Activated CD4-positive, alpha-beta memory T cell treated with anti-CD3 and anti-CD28 coated beads for 36 hours (primary cell): ENCODE measurements at regions of chr12 and their contacts with region 1.

Region 1: DNA sequence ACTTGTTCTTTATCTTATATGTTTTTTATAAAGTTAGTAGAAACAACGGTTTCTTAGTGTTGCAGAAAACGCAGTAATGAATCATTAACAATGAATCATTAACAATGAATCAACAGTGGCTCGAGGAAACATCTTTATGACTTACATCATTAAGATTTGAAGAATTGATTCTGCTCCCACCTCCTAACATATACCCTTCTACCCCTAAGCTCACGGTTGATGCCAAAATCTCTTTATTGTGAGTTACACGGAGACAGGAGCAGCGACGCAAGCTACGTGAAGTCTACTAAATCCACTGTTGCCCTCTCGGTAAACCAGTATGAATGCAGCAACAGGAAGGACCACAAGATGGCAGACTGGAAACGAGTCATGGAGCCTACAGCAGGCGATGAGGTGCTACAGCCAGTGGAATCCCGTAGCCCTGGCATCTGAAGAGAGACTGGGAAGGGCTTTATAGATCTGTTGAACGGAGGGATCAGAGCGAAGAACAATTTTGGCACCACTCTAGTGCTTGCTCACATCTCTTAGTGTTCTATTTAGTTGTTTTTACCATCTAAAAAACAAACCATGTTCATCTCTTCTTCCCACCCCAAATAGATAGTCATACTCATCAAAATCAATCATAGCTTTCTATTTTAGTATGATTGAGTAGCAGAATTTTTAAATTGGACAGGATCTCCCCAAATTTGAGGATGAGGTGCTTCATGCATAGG is 332.7 kb downstream of the DUSP6 start:
- DNase-seq: peak; percentile 79
- H3K4me3 Mint-ChIP-seq: no peak overlapping the region
- H3K27ac Mint-ChIP-seq: no peak overlapping the region
- H3K4me1 Mint-ChIP-seq: peaks cover 8% of the 10 kb centered on the region
- H3K27me3 Mint-ChIP-seq: peaks cover 5% of the 10 kb centered on the region

Region 2: GRCh38 chr12:88935856-88936255 is 83.7 kb before region 1 on chr12:
- CTCF ChIA-PET with region 1: no interaction called
- POLR2A ChIA-PET with region 1: no interaction called
- intact Hi-C with region 1: no loop called
- DNase-seq: no peak
- H3K4me3 Mint-ChIP-seq: no peak overlapping the region
- H3K27ac Mint-ChIP-seq: no peak overlapping the region
- H3K4me1 Mint-ChIP-seq: no peaks in the 10 kb centered on the region
- H3K27me3 Mint-ChIP-seq: no peaks in the 10 kb centered on the region

Region 3: DNA sequence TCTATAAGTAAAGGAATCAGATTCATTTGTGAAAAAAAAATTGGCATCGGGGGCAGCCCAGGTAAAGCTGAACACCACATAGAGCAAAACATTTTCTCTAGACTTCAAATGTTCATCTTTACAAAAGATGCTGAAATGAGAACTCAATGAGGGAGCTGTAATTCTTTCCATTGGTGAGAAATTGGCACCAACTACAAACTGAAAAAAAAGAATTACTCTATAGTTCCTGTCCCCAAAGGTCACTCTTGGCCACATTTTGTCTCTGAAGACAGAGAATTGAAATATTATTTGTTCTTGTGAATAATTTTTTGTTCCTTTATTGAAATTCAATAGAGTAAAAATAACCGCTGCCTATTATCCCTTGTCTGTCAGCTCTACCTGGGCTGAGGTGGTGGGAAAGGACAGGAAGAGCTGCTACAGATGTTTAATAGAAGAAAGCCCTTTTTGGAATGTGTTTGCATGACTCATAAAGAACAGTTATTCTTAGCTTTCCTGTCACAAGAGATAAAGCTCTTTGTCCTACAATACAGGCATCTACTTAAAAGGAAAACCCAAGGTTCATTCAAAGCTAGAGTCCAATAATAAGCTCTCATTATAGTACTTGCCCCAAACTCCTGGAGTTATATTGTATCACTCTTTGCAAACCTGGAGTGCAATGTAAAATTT is 59.2 kb before region 1 on chr12:
- CTCF ChIA-PET with region 1: no interaction called
- POLR2A ChIA-PET with region 1: no interaction called
- intact Hi-C with region 1: no loop called
- DNase-seq: no peak
- H3K4me3 Mint-ChIP-seq: no peak overlapping the region
- H3K27ac Mint-ChIP-seq: no peak overlapping the region
- H3K4me1 Mint-ChIP-seq: no peaks in the 10 kb centered on the region
- H3K27me3 Mint-ChIP-seq: peaks cover 3% of the 10 kb centered on the region

Region 4: GRCh38 chr12:89029961-89030360 is 10.4 kb after region 1 on chr12:
- CTCF ChIA-PET with region 1: interaction called, 16 read pairs
- POLR2A ChIA-PET with region 1: no interaction called
- intact Hi-C with region 1: no loop called
- DNase-seq: no peak
- H3K4me3 Mint-ChIP-seq: no peak overlapping the region
- H3K27ac Mint-ChIP-seq: no peak overlapping the region
- H3K4me1 Mint-ChIP-seq: peaks cover 3% of the 10 kb centered on the region
- H3K27me3 Mint-ChIP-seq: peaks cover 4% of the 10 kb centered on the region

Region 5: DNA sequence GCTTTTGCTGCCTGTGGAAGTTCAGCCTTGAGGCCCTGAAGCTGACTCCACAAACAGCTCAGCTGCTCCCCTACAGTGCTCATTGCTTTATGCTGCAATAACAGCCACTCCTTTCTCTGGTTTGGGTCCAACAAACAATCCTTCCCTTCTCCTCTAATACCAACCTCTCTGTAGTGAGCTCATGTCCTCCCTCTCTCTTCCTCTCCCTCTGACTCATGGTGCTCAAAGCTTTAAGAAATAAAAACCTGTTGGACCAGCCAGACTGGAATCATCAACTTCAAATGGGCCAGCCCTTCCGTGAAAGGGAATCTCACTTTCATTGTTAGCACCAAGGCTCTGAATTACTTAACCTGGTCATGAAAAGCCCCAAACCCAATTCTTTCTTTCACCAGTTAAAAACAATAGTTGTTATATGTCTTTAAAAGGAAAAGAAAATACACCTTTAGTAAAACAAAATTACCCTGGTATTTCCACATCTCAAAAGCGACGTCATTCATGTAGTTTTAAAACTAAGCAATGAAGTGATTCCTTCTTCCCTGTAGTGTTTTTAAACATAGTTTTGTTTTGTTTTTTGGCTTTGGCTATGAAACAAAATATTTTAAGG is 206.3 kb after region 1 on chr12:
- CTCF ChIA-PET with region 1: interaction called, 6 read pairs
- POLR2A ChIA-PET with region 1: no interaction called
- intact Hi-C with region 1: loop called (anchors 2 kb)
- DNase-seq: peak; percentile 72
- H3K4me3 Mint-ChIP-seq: peak overlapping the region; percentile 34
- H3K27ac Mint-ChIP-seq: peak overlapping the region; percentile 99
- H3K4me1 Mint-ChIP-seq: peaks cover 65% of the 10 kb centered on the region
- H3K27me3 Mint-ChIP-seq: no peaks in the 10 kb centered on the region

Region 6: GRCh38 chr12:89470741-89471509 is 451.4 kb after region 1 on chr12:
- CTCF ChIA-PET with region 1: interaction called, 25 read pairs
- POLR2A ChIA-PET with region 1: no interaction called
- intact Hi-C with region 1: no loop called
- DNase-seq: no peak
- H3K4me3 Mint-ChIP-seq: no peak overlapping the region
- H3K27ac Mint-ChIP-seq: peak overlapping the region; percentile 64
- H3K4me1 Mint-ChIP-seq: peaks cover 58% of the 10 kb centered on the region
- H3K27me3 Mint-ChIP-seq: no peaks in the 10 kb centered on the region

Region 7: DNA sequence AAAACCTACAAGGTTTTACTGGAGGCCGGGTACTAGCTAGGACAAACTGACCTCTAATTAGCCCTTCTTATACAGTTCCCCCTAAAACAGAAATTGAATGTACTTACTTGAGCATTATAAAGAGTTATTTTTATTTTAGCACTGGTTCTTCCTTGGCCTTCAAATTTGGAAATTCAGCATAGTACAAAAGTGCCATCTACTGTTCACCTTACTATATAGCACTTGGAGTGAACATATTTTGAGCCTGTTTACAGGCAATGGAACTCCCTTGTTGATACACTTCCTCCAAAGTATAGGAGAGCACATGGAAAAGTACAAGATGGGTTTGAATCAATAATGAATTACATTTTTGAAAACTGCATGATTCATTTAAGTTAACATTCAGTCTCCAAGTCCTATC is 510.2 kb after region 1 on chr12:
- CTCF ChIA-PET with region 1: interaction called, 88 read pairs
- POLR2A ChIA-PET with region 1: interaction called, 4 read pairs
- intact Hi-C with region 1: loop called (anchors 1 kb)
- DNase-seq: no peak
- H3K4me3 Mint-ChIP-seq: no peak overlapping the region
- H3K27ac Mint-ChIP-seq: no peak overlapping the region
- H3K4me1 Mint-ChIP-seq: peaks cover 12% of the 10 kb centered on the region
- H3K27me3 Mint-ChIP-seq: no peaks in the 10 kb centered on the region

Region 8: GRCh38 chr12:90102957-90103652 is 1083.5 kb after region 1 on chr12:
- CTCF ChIA-PET with region 1: no interaction called
- POLR2A ChIA-PET with region 1: no interaction called
- intact Hi-C with region 1: loop called (anchors 10 kb)
- DNase-seq: peak; percentile 13
- H3K4me3 Mint-ChIP-seq: peak overlapping the region; percentile 19
- H3K27ac Mint-ChIP-seq: no peak overlapping the region
- H3K4me1 Mint-ChIP-seq: peaks cover 13% of the 10 kb centered on the region
- H3K27me3 Mint-ChIP-seq: no peaks in the 10 kb centered on the region

Region 9: DNA sequence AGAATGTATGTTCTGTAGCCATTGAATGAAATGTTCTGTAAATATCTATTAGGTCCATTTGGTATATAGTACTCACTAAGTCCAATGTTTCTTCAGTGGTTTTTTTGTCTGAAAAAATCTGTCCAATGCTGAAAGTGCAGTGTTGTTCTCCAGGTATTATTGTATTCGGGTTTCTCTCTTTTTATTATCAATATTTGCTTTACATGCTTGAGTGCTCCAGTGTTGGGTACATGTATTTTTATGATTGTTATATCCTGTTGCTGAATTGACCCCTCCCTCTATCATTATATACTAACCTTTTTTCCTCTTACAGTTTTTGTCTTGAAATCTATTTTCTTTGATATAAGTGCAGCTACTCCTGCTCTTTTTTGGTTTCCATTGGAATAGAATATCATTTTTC is 1553.2 kb after region 1 on chr12:
- CTCF ChIA-PET with region 1: no interaction called
- POLR2A ChIA-PET with region 1: no interaction called
- intact Hi-C with region 1: no loop called
- DNase-seq: no peak
- H3K4me3 Mint-ChIP-seq: no peak overlapping the region
- H3K27ac Mint-ChIP-seq: no peak overlapping the region
- H3K4me1 Mint-ChIP-seq: no peaks in the 10 kb centered on the region
- H3K27me3 Mint-ChIP-seq: no peaks in the 10 kb centered on the region